GM23248 (cell line): ENCODE measurements at regions of chrX and their contacts with region 1.

Region 1: GRCh38 chrX:107654872-107655761 is 26.8 kb downstream of the PRPS1 start:
- DNase-seq: peak; percentile 94
- H3K4me3 ChIP-seq: no peak overlapping the region
- H3K27ac ChIP-seq: peak overlapping the region; percentile 80
- H3K4me1 ChIP-seq: peaks cover 6% of the 10 kb centered on the region
- H3K27me3 ChIP-seq: no peaks in the 10 kb centered on the region

Region 2: GRCh38 chrX:107716816-107717700 is 61.9 kb after region 1 on chrX:
- in situ Hi-C with region 1: loop called (anchors 10 kb)
- DNase-seq: peak; percentile 82
- H3K4me3 ChIP-seq: peak overlapping the region; percentile 91
- H3K27ac ChIP-seq: peak overlapping the region; percentile 95
- H3K4me1 ChIP-seq: peaks cover 39% of the 10 kb centered on the region
- H3K27me3 ChIP-seq: no peaks in the 10 kb centered on the region

Region 3: GRCh38 chrX:107773206-107773605 is 118.1 kb after region 1 on chrX:
- in situ Hi-C with region 1: no loop called
- DNase-seq: no peak
- H3K4me3 ChIP-seq: no peak overlapping the region
- H3K27ac ChIP-seq: no peak overlapping the region
- H3K4me1 ChIP-seq: no peaks in the 10 kb centered on the region
- H3K27me3 ChIP-seq: no peaks in the 10 kb centered on the region

Region 4: DNA sequence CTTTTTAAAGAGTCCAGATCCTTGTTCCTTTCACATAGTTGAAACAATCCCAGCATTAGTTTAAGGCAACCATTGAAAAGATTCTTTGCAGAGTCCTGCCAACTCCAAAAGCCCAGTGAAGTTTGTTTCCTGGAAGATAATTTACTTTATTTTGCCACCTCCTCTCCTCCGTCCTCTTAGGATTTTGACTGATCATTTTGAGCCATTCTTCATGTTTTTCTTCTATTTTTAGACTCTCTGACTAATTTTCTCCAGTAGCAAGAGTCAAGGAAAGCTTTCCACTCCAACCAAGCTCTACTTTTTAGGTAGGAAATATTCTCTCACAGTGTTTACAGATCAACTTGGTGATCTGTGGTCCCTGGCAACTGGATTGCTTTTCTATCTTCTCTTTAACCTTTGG is 132.7 kb after region 1 on chrX:
- in situ Hi-C with region 1: loop called (anchors 10 kb)
- DNase-seq: peak; percentile 14
- H3K4me3 ChIP-seq: no peak overlapping the region
- H3K27ac ChIP-seq: no peak overlapping the region
- H3K4me1 ChIP-seq: no peaks in the 10 kb centered on the region
- H3K27me3 ChIP-seq: no peaks in the 10 kb centered on the region

Region 5: GRCh38 chrX:107894038-107894437 is 238.9 kb after region 1 on chrX:
- in situ Hi-C with region 1: loop called (anchors 25 kb)
- DNase-seq: peak; percentile 37
- H3K4me3 ChIP-seq: no peak overlapping the region
- H3K27ac ChIP-seq: no peak overlapping the region
- H3K4me1 ChIP-seq: no peaks in the 10 kb centered on the region
- H3K27me3 ChIP-seq: no peaks in the 10 kb centered on the region

Region 6: GRCh38 chrX:108036298-108036973 is 381.3 kb after region 1 on chrX:
- in situ Hi-C with region 1: no loop called
- DNase-seq: peak; percentile 43
- H3K4me3 ChIP-seq: no peak overlapping the region
- H3K27ac ChIP-seq: no peak overlapping the region
- H3K4me1 ChIP-seq: no peaks in the 10 kb centered on the region
- H3K27me3 ChIP-seq: no peaks in the 10 kb centered on the region

Region 7: DNA sequence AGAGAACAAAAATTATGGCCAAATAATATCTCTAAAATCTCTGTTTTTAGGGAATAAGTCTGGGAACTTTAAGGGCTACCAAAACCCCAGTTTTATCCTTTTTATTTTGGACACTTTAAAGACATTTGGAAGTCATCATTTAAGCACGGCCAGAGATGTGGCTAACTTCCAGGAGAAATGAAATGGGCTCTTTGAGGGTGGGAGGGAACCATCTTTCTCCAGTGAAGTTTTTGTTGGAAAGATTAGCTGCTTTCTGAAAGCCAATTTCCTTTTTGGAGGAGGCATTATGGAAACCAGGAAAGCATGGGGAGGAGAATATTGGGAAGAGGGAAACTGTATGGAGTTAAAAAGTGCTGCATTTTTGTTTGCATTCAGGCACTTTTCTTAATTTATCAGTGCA is 394.5 kb after region 1 on chrX:
- in situ Hi-C with region 1: no loop called
- DNase-seq: no peak
- H3K4me3 ChIP-seq: no peak overlapping the region
- H3K27ac ChIP-seq: no peak overlapping the region
- H3K4me1 ChIP-seq: no peaks in the 10 kb centered on the region
- H3K27me3 ChIP-seq: no peaks in the 10 kb centered on the region

Region 8: GRCh38 chrX:108312938-108313337 is 657.8 kb after region 1 on chrX:
- in situ Hi-C with region 1: no loop called
- DNase-seq: peak; percentile 80
- H3K4me3 ChIP-seq: no peak overlapping the region
- H3K27ac ChIP-seq: peak overlapping the region; percentile 45
- H3K4me1 ChIP-seq: peaks cover 16% of the 10 kb centered on the region
- H3K27me3 ChIP-seq: no peaks in the 10 kb centered on the region